ENCODE measurements at regions of chr2 and their contacts with region 1.

Region 1: GRCh38 chr2:56502616-56503015 is 318.8 kb downstream of the CCDC85A start:
- DNase-seq: no peak
- ATAC-seq: no peak
- H3K4me3 ChIP-seq: no peak overlapping the region
- H3K27ac ChIP-seq: no peak overlapping the region
- H3K4me1 ChIP-seq: no peaks in the 10 kb centered on the region
- H3K27me3 ChIP-seq: no peaks in the 10 kb centered on the region
- CTCF ChIP-seq: no peak
- POLR2A ChIP-seq: no peak

Region 2: DNA sequence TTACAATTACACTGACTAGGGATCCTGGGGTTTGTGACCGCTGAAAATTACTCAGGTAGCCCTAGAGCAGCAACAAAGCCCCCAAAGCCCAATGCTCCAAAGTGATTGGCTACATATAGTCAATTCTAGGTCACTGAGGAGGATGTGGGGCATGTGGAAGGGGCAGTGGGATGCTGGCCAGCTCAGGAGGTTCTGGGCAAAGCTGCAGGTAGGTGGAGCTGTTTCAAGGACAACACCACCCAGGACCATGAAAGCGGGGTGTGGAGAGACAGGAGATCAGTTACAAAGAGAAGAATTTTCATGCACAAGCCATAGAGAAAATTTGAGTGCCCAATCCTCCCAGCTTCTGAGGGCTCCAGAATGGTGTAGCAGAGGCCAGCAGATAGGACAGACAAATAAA is 393.8 kb before region 1 on chr2:
- in situ Hi-C with region 1: no loop called
- intact Hi-C with region 1: no loop called
- DNase-seq: no peak
- ATAC-seq: no peak
- H3K4me3 ChIP-seq: no peak overlapping the region
- H3K27ac ChIP-seq: no peak overlapping the region
- H3K4me1 ChIP-seq: no peaks in the 10 kb centered on the region
- H3K27me3 ChIP-seq: no peaks in the 10 kb centered on the region
- CTCF ChIP-seq: no peak
- POLR2A ChIP-seq: no peak

Region 3: GRCh38 chr2:56132138-56132537 is 370.5 kb before region 1 on chr2:
- in situ Hi-C with region 1: no loop called
- intact Hi-C with region 1: loop called (anchors 5 kb)
- DNase-seq: no peak
- ATAC-seq: no peak
- H3K4me3 ChIP-seq: no peak overlapping the region
- H3K27ac ChIP-seq: no peak overlapping the region
- H3K4me1 ChIP-seq: no peaks in the 10 kb centered on the region
- H3K27me3 ChIP-seq: no peaks in the 10 kb centered on the region
- CTCF ChIP-seq: peak in 2 of 5 experiments; percentile 14 to 39
- POLR2A ChIP-seq: no peak

Region 4: GRCh38 chr2:56334622-56335021 is 168.0 kb before region 1 on chr2:
- in situ Hi-C with region 1: no loop called
- intact Hi-C with region 1: no loop called
- DNase-seq: no peak
- ATAC-seq: no peak
- H3K4me3 ChIP-seq: no peak overlapping the region
- H3K27ac ChIP-seq: peak overlapping the region in 3 of 4 donors; percentile 17 to 35 (median 28)
- H3K4me1 ChIP-seq: peaks cover 23 to 28% of the 10 kb centered on the region in 2 donors
- H3K27me3 ChIP-seq: no peaks in the 10 kb centered on the region
- CTCF ChIP-seq: no peak
- POLR2A ChIP-seq: no peak

Region 5: DNA sequence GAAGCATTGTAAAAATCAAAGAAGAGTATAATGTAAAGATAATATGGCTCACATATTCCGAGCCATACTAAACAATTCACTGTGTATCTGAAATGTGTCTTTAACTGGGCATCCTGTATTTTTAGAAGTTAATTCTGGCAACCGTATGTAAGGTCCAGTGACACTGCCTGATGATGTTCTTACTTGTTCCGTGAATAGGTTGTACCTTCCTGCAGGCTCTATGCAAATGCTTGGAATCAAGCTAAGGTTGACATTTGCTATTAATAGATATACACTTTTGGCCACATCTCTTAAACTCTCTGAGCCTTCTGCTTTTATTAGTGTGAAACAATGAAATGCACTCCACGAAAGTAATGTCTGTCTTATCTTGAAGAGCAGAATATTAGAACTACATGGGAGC is 215.8 kb after region 1 on chr2:
- in situ Hi-C with region 1: no loop called
- intact Hi-C with region 1: no loop called
- DNase-seq: no peak
- ATAC-seq: peak; percentile 51 to 93
- H3K4me3 ChIP-seq: no peak overlapping the region
- H3K27ac ChIP-seq: peak overlapping the region in 1 of 4 donors; percentile 57
- H3K4me1 ChIP-seq: peaks cover 11 to 34% of the 10 kb centered on the region in 2 donors
- H3K27me3 ChIP-seq: no peaks in the 10 kb centered on the region
- CTCF ChIP-seq: no peak
- POLR2A ChIP-seq: no peak

Region 6: GRCh38 chr2:57622009-57622408 is 1119.4 kb after region 1 on chr2:
- in situ Hi-C with region 1: no loop called
- intact Hi-C with region 1: no loop called
- DNase-seq: no peak
- ATAC-seq: no peak
- H3K4me3 ChIP-seq: no peak overlapping the region
- H3K27ac ChIP-seq: no peak overlapping the region
- H3K4me1 ChIP-seq: no peaks in the 10 kb centered on the region
- H3K27me3 ChIP-seq: no peaks in the 10 kb centered on the region
- CTCF ChIP-seq: no peak
- POLR2A ChIP-seq: no peak